Calu3 (cell line): ENCODE measurements at regions of chr6 and their contacts with region 1.

Region 1: GRCh38 chr6:75526502-75527127 is 33.0 kb upstream of the FILIP1 start:
- DNase-seq: peak; percentile 77
- H3K4me3 Mint-ChIP-seq: no peak overlapping the region
- H3K27ac Mint-ChIP-seq: no peak overlapping the region
- H3K4me1 Mint-ChIP-seq: no peaks in the 10 kb centered on the region
- H3K27me3 Mint-ChIP-seq: peaks cover 30% of the 10 kb centered on the region
- CTCF ChIP-seq: peak; percentile 64

Region 2: DNA sequence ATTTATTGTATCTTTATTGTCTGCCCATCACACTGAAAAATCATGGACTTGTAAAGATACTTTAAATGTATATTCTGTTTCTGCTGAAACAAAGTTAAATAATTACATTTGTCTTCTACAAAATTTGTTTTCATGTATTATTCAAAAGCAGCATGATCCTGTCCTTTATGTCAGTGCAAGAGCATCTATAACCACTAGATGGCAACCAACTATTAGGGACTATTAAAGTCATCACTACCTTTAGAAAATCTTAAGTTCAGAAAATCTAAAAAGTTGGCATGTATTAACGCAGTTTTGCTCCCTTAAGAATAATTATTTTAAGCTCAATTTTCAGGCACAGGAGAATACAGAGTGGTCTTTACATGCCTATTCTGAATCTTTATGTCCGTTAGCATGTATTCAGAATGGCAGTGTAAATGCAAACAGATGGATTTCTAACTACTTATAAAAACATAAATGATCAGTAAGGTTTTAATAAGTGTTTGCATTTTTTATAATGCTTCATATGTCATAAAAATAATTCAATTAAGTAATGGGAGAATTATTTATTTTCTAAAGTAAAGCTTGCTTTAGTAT is 259.8 kb before region 1 on chr6:
- CTCF ChIA-PET with region 1: interaction called, 3 read pairs
- intact Hi-C with region 1: loop called (anchors 1 kb)
- DNase-seq: no peak
- H3K4me3 Mint-ChIP-seq: no peak overlapping the region
- H3K27ac Mint-ChIP-seq: no peak overlapping the region
- H3K4me1 Mint-ChIP-seq: peaks cover 14% of the 10 kb centered on the region
- H3K27me3 Mint-ChIP-seq: no peaks in the 10 kb centered on the region
- CTCF ChIP-seq: peak; percentile 62

Region 3: DNA sequence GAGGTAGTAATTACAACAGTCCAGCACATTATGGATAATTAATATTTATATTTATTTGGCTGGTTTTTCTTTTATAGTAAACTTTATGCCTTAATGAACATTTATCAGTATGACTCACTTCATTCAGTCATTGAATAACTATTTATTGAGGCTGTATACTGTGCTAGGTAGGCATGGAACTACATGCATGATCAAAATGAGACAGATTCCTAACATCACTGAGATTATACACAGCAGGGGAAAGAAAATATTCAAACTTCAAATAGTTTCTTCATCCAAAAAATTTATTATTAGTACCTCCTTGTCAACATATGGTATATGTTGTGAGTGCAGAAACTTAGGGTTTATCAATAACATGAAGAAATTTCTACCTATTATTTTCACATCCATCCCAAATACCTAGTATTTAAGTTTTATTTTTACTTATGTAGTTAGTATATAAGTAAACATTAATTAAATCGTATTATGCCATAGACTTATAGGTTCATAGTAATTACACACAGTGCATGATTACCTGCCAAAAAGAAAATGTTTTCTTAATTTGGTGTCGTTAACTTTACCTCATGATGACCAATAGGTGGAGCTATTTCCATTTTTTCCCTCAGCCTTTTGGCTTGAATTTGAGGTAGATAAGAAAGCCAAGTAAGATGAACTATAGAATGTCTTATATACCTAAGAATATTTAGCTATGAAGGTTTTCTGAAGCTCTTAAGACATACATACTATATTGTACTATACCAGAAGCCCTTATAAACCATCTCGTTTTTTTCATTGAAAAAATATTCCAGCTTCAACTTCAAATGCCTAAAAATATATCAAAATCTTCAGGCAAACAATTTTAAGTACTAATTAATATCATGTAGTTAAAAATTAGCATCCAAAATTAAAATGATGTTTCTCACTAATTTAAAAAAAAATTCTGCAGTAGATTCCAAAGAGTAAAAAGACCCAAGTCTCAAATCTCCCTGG is 229.5 kb before region 1 on chr6:
- CTCF ChIA-PET with region 1: interaction called, 10 read pairs
- intact Hi-C with region 1: loop called (anchors 1 kb)
- DNase-seq: peak; percentile 15
- H3K4me3 Mint-ChIP-seq: no peak overlapping the region
- H3K27ac Mint-ChIP-seq: no peak overlapping the region
- H3K4me1 Mint-ChIP-seq: no peaks in the 10 kb centered on the region
- H3K27me3 Mint-ChIP-seq: no peaks in the 10 kb centered on the region
- CTCF ChIP-seq: peak; percentile 68

Region 4: GRCh38 chr6:75368151-75368779 is 158.3 kb before region 1 on chr6:
- CTCF ChIA-PET with region 1: interaction called, 15 read pairs
- intact Hi-C with region 1: loop called (anchors 1 kb)
- DNase-seq: peak; percentile 77
- H3K4me3 Mint-ChIP-seq: no peak overlapping the region
- H3K27ac Mint-ChIP-seq: no peak overlapping the region
- H3K4me1 Mint-ChIP-seq: peaks cover 10% of the 10 kb centered on the region
- H3K27me3 Mint-ChIP-seq: no peaks in the 10 kb centered on the region
- CTCF ChIP-seq: peak; percentile 79

Region 5: GRCh38 chr6:75418233-75418632 is 108.4 kb before region 1 on chr6:
- CTCF ChIA-PET with region 1: interaction called, 4 read pairs
- intact Hi-C with region 1: loop called (anchors 1 kb)
- DNase-seq: peak; percentile 30
- H3K4me3 Mint-ChIP-seq: peak overlapping the region; percentile 14
- H3K27ac Mint-ChIP-seq: peak overlapping the region; percentile 72
- H3K4me1 Mint-ChIP-seq: peaks cover 52% of the 10 kb centered on the region
- H3K27me3 Mint-ChIP-seq: no peaks in the 10 kb centered on the region
- CTCF ChIP-seq: no peak

Region 6: GRCh38 chr6:75934643-75935472 is 408.2 kb after region 1 on chr6:
- CTCF ChIA-PET with region 1: no interaction called
- intact Hi-C with region 1: loop called (anchors 5 kb)
- DNase-seq: peak; percentile 53
- H3K4me3 Mint-ChIP-seq: peak overlapping the region; percentile 1
- H3K27ac Mint-ChIP-seq: no peak overlapping the region
- H3K4me1 Mint-ChIP-seq: peaks cover 8% of the 10 kb centered on the region
- H3K27me3 Mint-ChIP-seq: no peaks in the 10 kb centered on the region
- CTCF ChIP-seq: peak; percentile 86

Region 7: DNA sequence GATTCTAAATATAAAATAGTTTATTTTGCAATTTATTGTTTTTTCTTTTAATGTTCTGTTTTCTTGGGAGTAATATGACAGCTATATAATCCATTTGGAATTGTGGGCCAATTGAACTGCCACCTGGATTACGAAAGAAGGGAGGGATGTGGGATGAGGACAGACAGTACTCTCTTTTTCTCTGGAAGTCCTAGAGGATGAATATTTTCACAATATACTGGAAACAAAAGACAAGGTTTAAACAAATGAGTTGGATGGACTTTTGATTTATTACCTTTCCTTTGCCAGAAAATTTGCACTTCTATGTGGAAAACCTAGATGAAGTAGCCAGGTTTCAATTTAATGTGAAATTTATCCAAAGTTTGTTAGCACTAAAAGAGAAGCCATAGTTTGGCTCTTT is 871.4 kb after region 1 on chr6:
- CTCF ChIA-PET with region 1: no interaction called
- intact Hi-C with region 1: loop called (anchors 5 kb)
- DNase-seq: no peak
- H3K4me3 Mint-ChIP-seq: no peak overlapping the region
- H3K27ac Mint-ChIP-seq: no peak overlapping the region
- H3K4me1 Mint-ChIP-seq: no peaks in the 10 kb centered on the region
- H3K27me3 Mint-ChIP-seq: no peaks in the 10 kb centered on the region
- CTCF ChIP-seq: no peak